ENCODE measurements at regions of chr6 and their contacts with region 1.

Region 1: DNA sequence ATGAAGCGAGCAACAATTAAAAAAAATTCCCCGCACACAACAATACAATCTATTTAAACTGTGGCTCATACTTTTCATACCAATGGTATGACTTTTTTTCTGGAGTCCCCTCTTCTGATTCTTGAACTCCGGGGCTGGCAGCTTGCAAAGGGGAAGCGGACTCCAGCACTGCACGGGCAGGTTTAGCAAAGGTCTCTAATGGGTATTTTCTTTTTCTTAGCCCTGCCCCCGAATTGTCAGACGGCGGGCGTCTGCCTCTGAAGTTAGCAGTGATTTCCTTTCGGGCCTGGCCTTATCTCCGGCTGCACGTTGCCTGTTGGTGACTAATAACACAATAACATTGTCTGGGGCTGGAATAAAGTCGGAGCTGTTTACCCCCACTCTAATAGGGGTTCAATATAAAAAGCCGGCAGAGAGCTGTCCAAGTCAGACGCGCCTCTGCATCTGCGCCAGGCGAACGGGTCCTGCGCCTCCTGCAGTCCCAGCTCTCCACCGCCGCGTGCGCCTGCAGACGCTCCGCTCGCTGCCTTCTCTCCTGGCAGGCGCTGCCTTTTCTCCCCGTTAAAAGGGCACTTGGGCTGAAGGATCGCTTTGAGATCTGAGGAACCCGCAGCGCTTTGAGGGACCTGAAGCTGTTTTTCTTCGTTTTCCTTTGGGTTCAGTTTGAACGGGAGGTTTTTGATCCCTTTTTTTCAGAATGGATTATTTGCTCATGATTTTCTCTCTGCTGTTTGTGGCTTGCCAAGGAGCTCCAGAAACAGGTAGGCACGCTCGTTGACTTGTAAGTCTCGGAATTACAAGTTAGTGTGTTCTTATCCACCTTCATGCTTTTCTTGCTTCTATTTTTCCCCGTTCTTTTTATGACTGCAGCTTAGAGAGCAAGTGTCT is at the start of gene EDN1:
- DNase-seq: peak; percentile 87
- H3K4me3 ChIP-seq: peak within 1 kb of the TSS; percentile 39
- H3K27ac ChIP-seq: no peak within 1 kb of the TSS
- H3K4me1 ChIP-seq: no peaks in the 10 kb centered on the region
- H3K27me3 ChIP-seq: peaks cover 25% of the 10 kb centered on the region
- CTCF ChIP-seq: peak; percentile 45
- total RNA-seq, gene EDN1: not detected in 2 replicates

Region 2: GRCh38 chr6:12150812-12151432 is 139.3 kb before region 1 on chr6:
- CTCF ChIA-PET with region 1: no interaction called
- POLR2A ChIA-PET with region 1: no interaction called
- intact Hi-C with region 1: loop called (anchors 5 kb)
- DNase-seq: peak; percentile 24
- H3K4me3 ChIP-seq: no peak overlapping the region
- H3K27ac ChIP-seq: no peak overlapping the region
- H3K4me1 ChIP-seq: no peaks in the 10 kb centered on the region
- H3K27me3 ChIP-seq: no peaks in the 10 kb centered on the region
- CTCF ChIP-seq: peak; percentile 58

Measured in A673 (cell line).